ENCODE measurements at regions of chr1 and their contacts with region 1.

Region 1: DNA sequence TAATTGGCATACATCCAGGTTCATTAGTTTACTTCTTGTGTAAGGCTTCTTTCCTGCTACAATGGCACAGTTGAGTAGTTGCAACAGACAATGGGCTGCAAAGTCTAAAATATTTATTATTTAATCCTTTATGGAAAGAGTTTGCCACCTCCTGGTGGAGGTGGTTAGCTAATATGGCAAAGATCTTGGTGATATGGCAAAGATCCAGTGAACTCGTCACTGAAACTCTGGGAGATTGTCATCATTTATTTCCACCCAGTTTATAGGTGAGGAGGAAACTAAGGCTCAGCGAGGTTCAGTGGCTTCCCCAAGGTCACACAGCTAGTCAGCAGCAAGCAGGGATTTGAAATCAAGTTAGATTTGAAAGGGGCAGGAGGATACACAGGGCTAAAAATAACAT is 16.1 kb upstream of the IFFO2 start:
- DNase-seq: no peak
- CTCF ChIP-seq: peak; percentile 32

Region 2: DNA sequence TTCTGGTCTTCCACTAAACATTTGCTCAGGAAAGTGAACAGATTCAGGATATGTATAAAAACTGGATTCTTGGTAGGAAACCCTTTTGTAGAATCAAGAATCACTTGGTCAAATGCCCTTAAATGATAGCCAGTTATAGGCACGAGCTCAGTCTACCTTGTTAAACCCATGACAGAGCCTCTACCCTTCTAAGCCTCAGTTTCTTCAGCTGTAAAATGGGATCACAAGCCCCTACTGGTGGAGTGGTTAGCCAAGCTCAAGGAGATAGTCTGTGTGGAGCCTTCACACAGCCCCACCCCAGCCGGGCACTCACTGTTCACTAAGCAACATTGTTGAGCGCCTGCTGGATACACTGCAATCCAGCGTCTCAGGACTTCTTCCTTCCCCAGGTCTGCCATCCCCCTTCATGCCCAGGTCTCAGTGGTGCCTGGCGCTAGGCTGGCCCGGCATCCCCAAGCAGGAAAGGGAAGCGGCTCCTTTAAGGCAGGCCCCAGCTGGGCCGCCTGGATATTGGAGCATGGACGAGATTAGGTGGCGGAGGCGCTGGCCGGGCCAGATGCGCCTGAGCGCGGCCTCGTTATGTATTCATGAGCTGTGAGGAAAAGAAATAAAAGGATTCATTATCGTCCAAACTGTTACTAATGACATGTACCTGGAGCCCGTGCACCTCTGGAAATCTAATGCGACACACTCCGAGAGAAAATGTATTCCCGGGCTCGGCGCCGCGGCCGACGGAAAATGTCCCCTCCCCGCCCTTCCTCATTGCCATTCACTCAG is 188.6 kb before region 1 on chr1:
- in situ Hi-C with region 1: no loop called
- DNase-seq: no peak
- CTCF ChIP-seq: no peak

Region 3: GRCh38 chr1:18913065-18913835 is 59.3 kb before region 1 on chr1:
- in situ Hi-C with region 1: loop called (anchors 10 kb)
- DNase-seq: peak; percentile 90
- CTCF ChIP-seq: peak; percentile 100